Endothelial cell of umbilical vein (primary cell): ENCODE measurements at regions of chr13 and their contacts with region 1.

Region 1: DNA sequence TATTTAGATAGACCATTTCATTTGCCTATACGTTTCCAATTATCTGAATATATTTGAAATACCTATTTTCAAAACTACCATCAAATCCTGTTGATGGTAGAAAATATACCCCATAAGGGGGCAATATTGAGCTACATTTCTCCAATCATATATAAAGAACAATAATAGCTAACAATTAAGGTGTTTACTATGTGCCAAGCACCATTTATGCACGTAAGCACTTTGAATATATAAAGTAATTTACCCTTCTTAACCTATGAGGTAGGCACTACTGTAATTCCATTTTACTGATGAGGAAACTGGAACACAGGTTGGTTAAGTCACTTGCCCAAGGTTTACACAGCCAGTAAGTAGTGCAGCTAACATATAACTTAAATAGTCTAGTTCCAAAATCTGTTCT is 79.2 kb downstream of the UBL3 start:
- DNase-seq: peak; percentile 60
- H3K4me3 ChIP-seq: no peak overlapping the region
- H3K27ac ChIP-seq: no peak overlapping the region
- H3K4me1 ChIP-seq: no peaks in the 10 kb centered on the region
- H3K27me3 ChIP-seq: no peaks in the 10 kb centered on the region
- CTCF ChIP-seq: peak in 1 of 2 donors; percentile 13
- POLR2A ChIP-seq: no peak

Region 2: GRCh38 chr13:29782798-29783197 is 11.6 kb after region 1 on chr13:
- CTCF ChIA-PET with region 1: interaction called, 10 read pairs
- POLR2A ChIA-PET with region 1: no interaction called
- dilution Hi-C with region 1: no loop called
- intact Hi-C with region 1: no loop called
- DNase-seq: no peak
- H3K4me3 ChIP-seq: no peak overlapping the region
- H3K27ac ChIP-seq: no peak overlapping the region
- H3K4me1 ChIP-seq: no peaks in the 10 kb centered on the region
- H3K27me3 ChIP-seq: no peaks in the 10 kb centered on the region
- CTCF ChIP-seq: no peak
- POLR2A ChIP-seq: no peak

Region 3: DNA sequence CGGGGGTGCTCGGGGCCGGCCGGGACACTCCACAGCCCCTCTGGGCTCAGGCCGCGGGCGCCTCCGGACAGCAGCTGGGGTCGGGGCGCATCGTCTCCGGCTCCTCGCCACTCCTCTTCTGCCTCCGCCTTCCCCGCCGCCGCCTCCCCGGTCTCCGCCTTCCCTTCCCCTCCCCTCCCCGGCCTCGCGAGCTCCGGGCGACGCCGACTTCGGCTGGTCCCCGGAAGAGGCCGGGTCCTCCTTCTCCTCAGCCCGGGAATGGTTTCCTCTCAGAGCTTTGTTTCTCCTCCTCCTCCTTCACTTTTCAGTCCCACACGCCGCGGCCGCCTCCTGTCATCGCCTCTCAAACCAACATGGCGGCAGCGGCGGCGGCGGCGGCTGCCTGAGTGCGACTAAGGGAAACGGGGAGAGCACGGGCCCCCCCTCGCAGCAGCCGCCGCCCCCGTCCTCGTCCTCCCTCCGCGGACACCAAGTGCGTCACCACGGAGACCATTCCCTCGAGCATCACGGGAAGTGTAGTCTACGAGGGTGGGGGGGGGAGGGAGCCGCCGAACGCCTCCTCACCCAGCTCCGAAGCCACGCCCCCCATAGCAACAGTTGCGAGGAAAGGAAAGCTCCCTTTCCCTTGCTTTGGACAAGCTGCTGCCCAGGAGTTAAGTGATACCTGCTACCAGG is 79.1 kb after region 1 on chr13 and contains the start of gene UBL3:
- CTCF ChIA-PET with region 1: interaction called, 13 read pairs
- POLR2A ChIA-PET with region 1: no interaction called
- dilution Hi-C with region 1: no loop called
- intact Hi-C with region 1: no loop called
- DNase-seq: peak; percentile 97
- H3K4me3 ChIP-seq: peak within 1 kb of the TSS; percentile 80 to 99 (median 98)
- H3K27ac ChIP-seq: peak within 1 kb of the TSS; percentile 83
- H3K4me1 ChIP-seq: peaks cover 22% of the 10 kb centered on the region
- H3K27me3 ChIP-seq: peaks cover 0 to 14% of the 10 kb centered on the region in 2 experiments
- CTCF ChIP-seq: no peak
- POLR2A ChIP-seq: peak; percentile 62
- total RNA-seq, gene UBL3: 11.1 and 11.8 TPM in 2 replicates